Lower leg skin (tissue), 4 donors: ENCODE measurements at regions of chr19 and their contacts with region 1.

Region 1: GRCh38 chr19:38729653-38730469 is 14.4 kb downstream of the CAPN12 start:
- DNase-seq: peak; percentile 34 to 92
- H3K4me3 ChIP-seq: no peak overlapping the region
- CTCF ChIP-seq: peak in 1 of 3 donors; percentile 30
- POLR2A ChIP-seq: no peak

Region 2: DNA sequence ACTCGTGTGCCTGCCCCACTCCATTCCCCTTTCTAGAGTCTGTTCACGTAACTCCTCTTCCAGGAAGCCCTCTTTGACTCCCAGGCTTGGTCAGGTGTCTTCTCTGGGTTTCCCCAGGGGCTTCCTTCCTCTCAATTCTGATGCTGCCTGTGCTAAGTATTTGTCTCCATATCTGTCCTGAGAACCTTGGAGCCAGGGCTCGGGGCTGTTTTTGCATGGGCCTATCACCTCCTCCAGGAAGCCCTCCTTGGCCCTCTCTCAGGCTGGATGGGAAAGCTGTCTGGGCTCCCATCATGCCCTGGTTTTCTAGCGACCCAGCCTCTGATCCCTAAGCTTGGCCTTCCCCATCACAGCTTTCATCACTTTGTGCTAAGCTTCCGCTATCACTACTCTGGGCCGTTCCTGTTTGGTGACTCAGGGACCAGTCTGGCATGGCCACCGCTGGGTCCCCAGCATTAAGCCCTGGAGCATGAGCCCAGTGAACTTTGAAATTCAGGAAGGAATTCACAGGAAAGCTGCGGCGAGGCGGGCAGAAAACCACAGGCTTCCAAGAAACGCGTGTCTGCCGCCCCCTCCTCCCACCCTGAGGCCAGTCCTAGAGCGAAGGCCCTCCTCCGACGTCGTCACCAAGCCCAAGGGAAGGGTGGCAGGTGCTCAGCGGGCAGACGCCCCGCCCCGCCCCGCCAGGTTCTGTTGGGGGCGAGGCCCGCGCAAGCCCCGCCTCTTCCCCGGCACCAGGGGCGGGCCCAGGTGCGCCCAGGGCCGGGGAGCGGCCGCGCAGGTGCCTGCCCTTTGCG is 466.0 kb before region 1 on chr19:
- intact Hi-C with region 1: no loop called
- DNase-seq: peak; percentile 71 to 91
- H3K4me3 ChIP-seq: peak overlapping the region; percentile 49
- CTCF ChIP-seq: no peak
- POLR2A ChIP-seq: no peak

Region 3: DNA sequence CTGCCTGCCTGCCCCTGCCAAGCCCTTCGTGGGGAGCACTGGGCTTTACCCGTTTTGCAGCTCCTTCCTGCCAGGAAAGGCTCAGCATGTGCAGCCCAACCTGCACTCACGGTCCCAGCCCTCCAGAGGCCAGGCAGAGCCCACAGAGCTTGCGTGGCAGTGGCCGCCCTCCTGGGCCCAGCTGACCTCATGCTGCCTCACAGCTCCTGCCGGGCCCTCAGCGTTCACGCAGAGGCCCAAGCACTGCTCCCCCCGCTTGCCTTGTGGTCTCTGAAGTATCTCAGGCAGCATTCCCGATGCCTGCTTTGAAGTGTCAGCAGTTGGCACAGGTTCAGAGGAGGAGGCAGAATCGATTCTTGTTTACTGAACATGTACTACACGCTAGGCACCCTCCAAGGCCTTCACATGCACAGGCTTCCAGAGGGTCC is 18.1 kb before region 1 on chr19:
- intact Hi-C with region 1: no loop called
- DNase-seq: no peak
- H3K4me3 ChIP-seq: no peak overlapping the region
- CTCF ChIP-seq: no peak
- POLR2A ChIP-seq: no peak

Region 4: GRCh38 chr19:38929929-38930775 is 200.3 kb after region 1 on chr19 and contains the start of gene SARS2:
- intact Hi-C with region 1: loop called (anchors 10 kb)
- DNase-seq: peak; percentile 88 to 98
- H3K4me3 ChIP-seq: peak within 1 kb of the TSS; percentile 66
- CTCF ChIP-seq: peak in 1 of 3 donors; percentile 96
- POLR2A ChIP-seq: no peak
- total RNA-seq, gene SARS2: 11.7 to 23.3 (median 20.0) TPM